ENCODE measurements at regions of chr17 and their contacts with region 1.

Region 1: DNA sequence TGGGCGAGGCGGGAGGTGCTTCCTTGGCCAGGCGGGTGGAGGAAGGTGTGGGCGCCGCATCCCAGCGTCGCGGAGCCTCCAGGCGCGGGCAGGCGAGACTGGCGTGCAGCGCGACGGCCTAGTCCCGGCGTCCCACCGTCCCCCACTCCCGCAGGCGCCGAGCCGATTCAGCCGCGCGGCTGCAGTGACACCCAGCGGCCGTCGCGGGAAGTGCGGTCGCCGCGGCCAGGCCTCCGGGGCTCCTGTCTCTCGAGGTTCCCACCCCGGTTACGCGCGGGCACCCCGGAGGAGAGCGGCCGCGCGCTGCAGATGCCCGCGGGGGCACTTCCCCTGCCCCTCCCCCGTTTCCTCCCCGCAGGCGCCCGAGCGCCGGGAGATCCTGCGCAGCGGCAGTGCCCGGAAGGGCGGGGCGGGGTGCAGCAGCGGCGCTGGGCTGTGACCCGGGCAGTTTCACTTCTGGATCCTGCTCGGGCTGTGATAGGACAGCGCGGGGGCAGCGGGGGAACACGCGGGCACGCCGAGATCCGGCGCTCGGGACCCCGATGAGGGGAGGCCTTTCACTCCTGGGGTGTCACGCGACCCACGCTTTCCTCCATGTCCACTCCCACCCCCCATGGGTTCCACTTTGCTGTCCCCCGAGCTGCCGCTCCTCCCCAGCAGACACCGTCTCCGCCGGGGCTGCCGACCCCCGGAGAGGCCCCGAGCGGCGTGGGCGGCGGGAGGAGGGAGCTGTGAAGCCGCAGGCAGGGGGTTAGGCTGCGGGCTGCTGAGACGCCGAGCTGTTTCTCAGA is 16.6 kb downstream of the GRB7 start:
- DNase-seq: peak; percentile 95 to 99 (median 97)
- ATAC-seq: peak; percentile 74
- H3K4me3 ChIP-seq: peak overlapping the region; percentile 64 to 75
- H3K4me3 Mint-ChIP-seq: peak overlapping the region; percentile 78
- H3K27ac ChIP-seq: peak overlapping the region; percentile 93 to 97
- H3K27ac Mint-ChIP-seq: peak overlapping the region; percentile 98
- H3K4me1 ChIP-seq: peaks cover 56% of the 10 kb centered on the region
- H3K4me1 Mint-ChIP-seq: peaks cover 59% of the 10 kb centered on the region
- H3K27me3 ChIP-seq: no peaks in the 10 kb centered on the region
- H3K27me3 Mint-ChIP-seq: no peaks in the 10 kb centered on the region
- CTCF ChIP-seq: peak; percentile 91

Region 2: GRCh38 chr17:39527220-39527813 is 227.0 kb before region 1 on chr17:
- CTCF ChIA-PET with region 1: no interaction called
- POLR2A ChIA-PET with region 1: no interaction called
- intact Hi-C with region 1: loop called in 1 of 2 experiments (anchors 5 kb)
- DNase-seq: peak in 2 of 9 experiments; percentile 19 to 32
- ATAC-seq: no peak
- H3K4me3 ChIP-seq: no peak overlapping the region
- H3K4me3 Mint-ChIP-seq: no peak overlapping the region
- H3K27ac ChIP-seq: no peak overlapping the region
- H3K27ac Mint-ChIP-seq: no peak overlapping the region
- H3K4me1 ChIP-seq: no peaks in the 10 kb centered on the region
- H3K4me1 Mint-ChIP-seq: no peaks in the 10 kb centered on the region
- H3K27me3 ChIP-seq: no peaks in the 10 kb centered on the region
- H3K27me3 Mint-ChIP-seq: no peaks in the 10 kb centered on the region
- CTCF ChIP-seq: peak; percentile 37

Region 3: DNA sequence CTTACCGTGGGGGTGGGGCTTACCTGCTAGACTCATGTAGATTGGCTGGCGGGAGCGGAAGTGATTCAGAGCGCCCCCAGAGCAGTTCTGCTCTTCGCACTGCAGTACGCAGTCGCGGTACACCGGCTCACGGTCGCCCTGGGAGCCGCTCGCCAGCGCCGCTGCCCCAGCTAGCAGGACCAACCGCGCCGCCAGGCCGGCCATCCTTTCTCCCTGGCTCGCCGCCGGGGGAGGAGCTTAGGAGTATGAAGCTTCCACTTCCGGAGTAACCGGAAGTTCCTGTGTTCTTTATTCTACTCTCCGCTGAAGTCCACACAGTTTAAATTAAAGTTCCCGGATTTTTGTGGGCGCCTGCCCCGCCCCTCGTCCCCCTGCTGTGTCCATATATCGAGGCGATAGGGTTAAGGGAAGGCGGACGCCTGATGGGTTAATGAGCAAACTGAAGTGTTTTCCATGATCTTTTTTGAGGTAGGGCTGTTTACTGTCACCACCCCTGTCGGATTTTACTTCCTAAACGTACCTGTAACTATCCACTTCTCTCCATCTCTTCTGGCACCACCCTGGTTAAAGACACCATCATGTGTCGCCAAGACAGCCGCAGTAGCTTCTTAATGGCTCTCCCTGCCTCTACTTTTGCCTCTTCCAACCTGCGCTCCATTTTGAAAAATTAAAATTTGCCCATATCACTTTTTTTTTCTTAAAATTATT is 66.4 kb before region 1 on chr17 and contains the start of gene PGAP3:
- CTCF ChIA-PET with region 1: interaction called, 3 read pairs
- POLR2A ChIA-PET with region 1: interaction called, 3 read pairs
- intact Hi-C with region 1: loop called (anchors 1 to 5 kb)
- DNase-seq: peak; percentile 54 to 92 (median 85)
- ATAC-seq: peak; percentile 93
- H3K4me3 ChIP-seq: peak within 1 kb of the TSS; percentile 68 to 85
- H3K4me3 Mint-ChIP-seq: peak within 1 kb of the TSS; percentile 97
- H3K27ac ChIP-seq: peak within 1 kb of the TSS; percentile 80 to 86
- H3K27ac Mint-ChIP-seq: peak within 1 kb of the TSS; percentile 98
- H3K4me1 ChIP-seq: peaks cover 17% of the 10 kb centered on the region
- H3K4me1 Mint-ChIP-seq: peaks cover 27% of the 10 kb centered on the region
- H3K27me3 ChIP-seq: peaks cover 0 to 2% of the 10 kb centered on the region in 2 experiments
- H3K27me3 Mint-ChIP-seq: no peaks in the 10 kb centered on the region
- CTCF ChIP-seq: no peak
- total RNA-seq, gene PGAP3: 20.9 to 22.6 TPM

Region 4: GRCh38 chr17:39777534-39778365 is 23.4 kb after region 1 on chr17:
- CTCF ChIA-PET with region 1: interaction called, 16 read pairs
- POLR2A ChIA-PET with region 1: interaction called, 39 read pairs
- intact Hi-C with region 1: no loop called
- DNase-seq: peak in 2 of 9 experiments; percentile 54 to 71
- ATAC-seq: peak; percentile 46
- H3K4me3 ChIP-seq: peak overlapping the region; percentile 50 to 64
- H3K4me3 Mint-ChIP-seq: peak overlapping the region; percentile 89
- H3K27ac ChIP-seq: peak overlapping the region; percentile 52 to 84
- H3K27ac Mint-ChIP-seq: peak overlapping the region; percentile 97
- H3K4me1 ChIP-seq: peaks cover 87% of the 10 kb centered on the region
- H3K4me1 Mint-ChIP-seq: peaks cover 85% of the 10 kb centered on the region
- H3K27me3 ChIP-seq: no peaks in the 10 kb centered on the region
- H3K27me3 Mint-ChIP-seq: no peaks in the 10 kb centered on the region
- CTCF ChIP-seq: no peak

Region 5: GRCh38 chr17:39822051-39822451 is 67.7 kb after region 1 on chr17:
- CTCF ChIA-PET with region 1: interaction called, 12 read pairs
- POLR2A ChIA-PET with region 1: interaction called, 6 read pairs
- intact Hi-C with region 1: loop called in 1 of 2 experiments (anchors 2 kb)
- DNase-seq: peak in 2 of 9 experiments; percentile 39 to 58
- ATAC-seq: no peak
- H3K4me3 ChIP-seq: no peak overlapping the region
- H3K4me3 Mint-ChIP-seq: no peak overlapping the region
- H3K27ac ChIP-seq: peak overlapping the region in 1 of 2 experiments; percentile 88
- H3K27ac Mint-ChIP-seq: peak overlapping the region; percentile 92
- H3K4me1 ChIP-seq: peaks cover 45% of the 10 kb centered on the region
- H3K4me1 Mint-ChIP-seq: peaks cover 50% of the 10 kb centered on the region
- H3K27me3 ChIP-seq: no peaks in the 10 kb centered on the region
- H3K27me3 Mint-ChIP-seq: no peaks in the 10 kb centered on the region
- CTCF ChIP-seq: no peak

Region 6: GRCh38 chr17:39952680-39953470 is 198.5 kb after region 1 on chr17:
- CTCF ChIA-PET with region 1: no interaction called
- POLR2A ChIA-PET with region 1: no interaction called
- intact Hi-C with region 1: loop called in 1 of 2 experiments (anchors 1 kb)
- DNase-seq: peak; percentile 92 to 97 (median 95)
- ATAC-seq: peak; percentile 87
- H3K4me3 ChIP-seq: peak overlapping the region; percentile 66 to 80
- H3K4me3 Mint-ChIP-seq: peak overlapping the region; percentile 86
- H3K27ac ChIP-seq: peak overlapping the region; percentile 51 to 74
- H3K27ac Mint-ChIP-seq: peak overlapping the region; percentile 89
- H3K4me1 ChIP-seq: peaks cover 26% of the 10 kb centered on the region
- H3K4me1 Mint-ChIP-seq: peaks cover 22% of the 10 kb centered on the region
- H3K27me3 ChIP-seq: no peaks in the 10 kb centered on the region
- H3K27me3 Mint-ChIP-seq: no peaks in the 10 kb centered on the region
- CTCF ChIP-seq: no peak

Region 7: GRCh38 chr17:39996800-39997199 is 242.4 kb after region 1 on chr17:
- CTCF ChIA-PET with region 1: no interaction called
- POLR2A ChIA-PET with region 1: no interaction called
- intact Hi-C with region 1: no loop called
- DNase-seq: no peak
- ATAC-seq: no peak
- H3K4me3 ChIP-seq: no peak overlapping the region
- H3K4me3 Mint-ChIP-seq: no peak overlapping the region
- H3K27ac ChIP-seq: no peak overlapping the region
- H3K27ac Mint-ChIP-seq: no peak overlapping the region
- H3K4me1 ChIP-seq: no peaks in the 10 kb centered on the region
- H3K4me1 Mint-ChIP-seq: no peaks in the 10 kb centered on the region
- H3K27me3 ChIP-seq: no peaks in the 10 kb centered on the region
- H3K27me3 Mint-ChIP-seq: no peaks in the 10 kb centered on the region
- CTCF ChIP-seq: no peak

Region 8: DNA sequence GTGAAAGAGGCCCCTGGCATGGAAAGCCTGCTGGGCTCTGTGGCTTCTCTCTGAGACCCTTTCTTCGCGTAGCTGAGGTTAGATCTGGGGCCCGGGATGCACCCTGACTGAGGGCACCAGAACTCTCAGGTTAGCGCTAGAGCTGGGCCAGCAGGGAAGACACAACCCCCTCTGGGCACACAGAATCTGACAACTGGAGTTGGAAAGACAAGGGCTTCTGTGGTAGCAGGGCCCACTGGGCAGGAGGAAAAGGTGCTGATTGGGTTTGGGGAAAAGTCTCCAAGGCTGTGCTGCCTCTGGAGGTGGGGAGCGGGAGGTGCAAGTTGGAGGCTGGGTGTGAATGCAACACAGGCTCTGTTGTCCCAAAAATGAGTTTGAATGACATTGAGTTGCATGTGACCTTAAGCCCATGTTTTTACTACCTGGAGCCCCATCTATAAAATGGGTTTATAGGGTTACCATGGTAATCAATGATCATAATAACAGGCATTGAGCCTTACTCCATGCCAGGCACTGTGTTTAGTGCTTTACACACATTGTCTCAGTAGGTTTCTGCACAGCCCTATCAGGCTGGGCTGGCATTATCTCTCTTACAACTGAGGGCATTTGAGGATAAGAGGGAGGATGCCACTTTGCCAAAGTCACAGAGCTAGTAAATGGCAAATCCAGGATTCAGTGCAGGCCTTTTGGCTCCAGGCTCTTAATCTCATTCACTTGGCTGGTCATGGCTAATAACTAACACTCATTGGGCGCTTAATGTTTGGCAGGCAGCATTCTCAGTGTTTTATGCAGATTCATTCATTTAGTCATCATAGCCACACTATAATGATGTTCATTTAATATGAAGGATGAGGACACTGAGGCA is 679.4 kb after region 1 on chr17:
- CTCF ChIA-PET with region 1: no interaction called
- POLR2A ChIA-PET with region 1: no interaction called
- intact Hi-C with region 1: no loop called
- DNase-seq: peak in 2 of 9 experiments; percentile 19 to 31
- ATAC-seq: no peak
- H3K4me3 ChIP-seq: no peak overlapping the region
- H3K4me3 Mint-ChIP-seq: no peak overlapping the region
- H3K27ac ChIP-seq: no peak overlapping the region
- H3K27ac Mint-ChIP-seq: no peak overlapping the region
- H3K4me1 ChIP-seq: no peaks in the 10 kb centered on the region
- H3K4me1 Mint-ChIP-seq: peaks cover 2% of the 10 kb centered on the region
- H3K27me3 ChIP-seq: no peaks in the 10 kb centered on the region
- H3K27me3 Mint-ChIP-seq: no peaks in the 10 kb centered on the region
- CTCF ChIP-seq: peak; percentile 36

Measured in CD8-positive, alpha-beta T cell (primary cell).